ENCODE measurements at regions of chr2 and their contacts with region 1.

Region 1: GRCh38 chr2:20446917-20447436 is at the start of gene RHOB:
- DNase-seq: peak; percentile 79 to 88 (median 82)
- H3K4me3 ChIP-seq: peak within 1 kb of the TSS; percentile 47 to 76
- H3K4me3 Mint-ChIP-seq: peak within 1 kb of the TSS; percentile 78 to 86 (median 82)
- H3K27ac ChIP-seq: peak within 1 kb of the TSS; percentile 47
- H3K27ac Mint-ChIP-seq: peak within 1 kb of the TSS in 5 of 7 donors; percentile 61 to 90 (median 75)
- H3K4me1 ChIP-seq: peaks cover 11% of the 10 kb centered on the region
- H3K4me1 Mint-ChIP-seq: peaks cover 0 to 9% (median 3%) of the 10 kb centered on the region in 4 donors
- H3K27me3 ChIP-seq: peaks cover 10% of the 10 kb centered on the region
- H3K27me3 Mint-ChIP-seq: peaks cover 8 to 13% of the 10 kb centered on the region in 2 donors
- total RNA-seq, gene RHOB: 7.9 to 8.9 TPM

Region 2: GRCh38 chr2:20424300-20425290 is 22.4 kb before region 1 on chr2:
- CTCF ChIA-PET with region 1: interaction called, 4 read pairs
- POLR2A ChIA-PET with region 1: interaction called, 14 read pairs
- intact Hi-C with region 1: no loop called
- DNase-seq: peak in 1 of 5 donors; percentile 9
- H3K4me3 ChIP-seq: no peak overlapping the region
- H3K4me3 Mint-ChIP-seq: peak overlapping the region in 7 of 8 donors; percentile 44 to 70 (median 63)
- H3K27ac ChIP-seq: no peak overlapping the region
- H3K27ac Mint-ChIP-seq: peak overlapping the region in 6 of 7 donors; percentile 82 to 94 (median 86)
- H3K4me1 ChIP-seq: peaks cover 15% of the 10 kb centered on the region
- H3K4me1 Mint-ChIP-seq: peaks cover 11 to 22% (median 17%) of the 10 kb centered on the region in 4 donors
- H3K27me3 ChIP-seq: no peaks in the 10 kb centered on the region
- H3K27me3 Mint-ChIP-seq: peaks cover 4% of the 10 kb centered on the region in 2 donors

Region 3: GRCh38 chr2:20578895-20579825 is 132.2 kb after region 1 on chr2:
- CTCF ChIA-PET with region 1: interaction called, 3 read pairs
- POLR2A ChIA-PET with region 1: interaction called, 31 read pairs
- intact Hi-C with region 1: loop called (anchors 5 kb)
- DNase-seq: no peak
- H3K4me3 ChIP-seq: no peak overlapping the region
- H3K4me3 Mint-ChIP-seq: no peak overlapping the region
- H3K27ac ChIP-seq: no peak overlapping the region
- H3K27ac Mint-ChIP-seq: no peak overlapping the region
- H3K4me1 ChIP-seq: peaks cover 18% of the 10 kb centered on the region
- H3K4me1 Mint-ChIP-seq: peaks cover 13 to 17% (median 15%) of the 10 kb centered on the region in 4 donors
- H3K27me3 ChIP-seq: no peaks in the 10 kb centered on the region
- H3K27me3 Mint-ChIP-seq: no peaks in the 10 kb centered on the region

Region 4: DNA sequence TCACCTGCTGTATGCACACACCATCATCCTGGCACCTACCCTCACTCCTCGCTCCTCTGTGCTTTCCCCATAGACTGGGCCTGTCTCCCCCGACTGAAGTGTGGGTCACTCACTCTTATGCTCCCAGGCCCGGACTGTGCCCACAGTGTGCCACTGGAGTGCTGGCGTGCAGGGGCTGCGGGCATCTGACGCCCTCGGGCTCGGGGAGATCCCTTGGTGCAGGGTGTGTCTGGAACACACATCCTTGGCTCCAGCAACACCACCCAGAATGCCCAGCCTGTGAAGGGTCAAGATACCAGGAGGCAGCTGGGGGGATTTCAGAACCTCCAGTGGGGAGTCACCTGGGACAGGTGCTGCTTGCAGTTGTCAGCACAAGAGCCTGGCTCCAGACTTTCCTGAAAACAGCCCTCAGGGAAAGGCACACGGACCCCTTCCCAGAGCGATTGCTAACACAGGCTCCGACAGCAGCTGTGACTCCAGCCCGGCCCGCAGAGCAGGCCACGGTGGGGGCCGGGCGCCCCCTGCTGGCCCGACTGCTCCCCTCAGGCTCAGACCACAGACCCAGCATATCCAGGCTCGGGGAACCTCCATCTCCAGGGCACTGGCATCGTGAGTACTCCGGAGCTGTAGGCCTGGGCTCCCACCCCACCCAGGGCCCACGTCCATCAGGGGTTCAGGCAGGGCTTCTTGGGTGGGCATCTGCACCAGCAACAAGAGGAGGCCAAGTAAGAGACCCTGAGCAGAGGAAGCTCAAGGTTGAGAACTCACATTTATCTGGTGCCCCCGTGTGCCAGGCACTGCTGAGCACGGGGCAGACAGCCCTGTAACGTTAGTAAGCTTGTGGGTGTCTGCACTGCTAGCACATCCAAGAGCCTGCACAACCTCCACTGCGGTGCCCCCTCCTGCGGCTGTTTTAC is 195.3 kb after region 1 on chr2:
- CTCF ChIA-PET with region 1: interaction called, 92 read pairs
- POLR2A ChIA-PET with region 1: interaction called, 20 read pairs
- intact Hi-C with region 1: loop called (anchors 1 kb)
- DNase-seq: peak; percentile 64 to 73 (median 70)
- H3K4me3 ChIP-seq: no peak overlapping the region
- H3K4me3 Mint-ChIP-seq: no peak overlapping the region
- H3K27ac ChIP-seq: no peak overlapping the region
- H3K27ac Mint-ChIP-seq: no peak overlapping the region
- H3K4me1 ChIP-seq: no peaks in the 10 kb centered on the region
- H3K4me1 Mint-ChIP-seq: peaks cover 5 to 13% (median 7%) of the 10 kb centered on the region in 4 donors
- H3K27me3 ChIP-seq: no peaks in the 10 kb centered on the region
- H3K27me3 Mint-ChIP-seq: no peaks in the 10 kb centered on the region

Region 5: DNA sequence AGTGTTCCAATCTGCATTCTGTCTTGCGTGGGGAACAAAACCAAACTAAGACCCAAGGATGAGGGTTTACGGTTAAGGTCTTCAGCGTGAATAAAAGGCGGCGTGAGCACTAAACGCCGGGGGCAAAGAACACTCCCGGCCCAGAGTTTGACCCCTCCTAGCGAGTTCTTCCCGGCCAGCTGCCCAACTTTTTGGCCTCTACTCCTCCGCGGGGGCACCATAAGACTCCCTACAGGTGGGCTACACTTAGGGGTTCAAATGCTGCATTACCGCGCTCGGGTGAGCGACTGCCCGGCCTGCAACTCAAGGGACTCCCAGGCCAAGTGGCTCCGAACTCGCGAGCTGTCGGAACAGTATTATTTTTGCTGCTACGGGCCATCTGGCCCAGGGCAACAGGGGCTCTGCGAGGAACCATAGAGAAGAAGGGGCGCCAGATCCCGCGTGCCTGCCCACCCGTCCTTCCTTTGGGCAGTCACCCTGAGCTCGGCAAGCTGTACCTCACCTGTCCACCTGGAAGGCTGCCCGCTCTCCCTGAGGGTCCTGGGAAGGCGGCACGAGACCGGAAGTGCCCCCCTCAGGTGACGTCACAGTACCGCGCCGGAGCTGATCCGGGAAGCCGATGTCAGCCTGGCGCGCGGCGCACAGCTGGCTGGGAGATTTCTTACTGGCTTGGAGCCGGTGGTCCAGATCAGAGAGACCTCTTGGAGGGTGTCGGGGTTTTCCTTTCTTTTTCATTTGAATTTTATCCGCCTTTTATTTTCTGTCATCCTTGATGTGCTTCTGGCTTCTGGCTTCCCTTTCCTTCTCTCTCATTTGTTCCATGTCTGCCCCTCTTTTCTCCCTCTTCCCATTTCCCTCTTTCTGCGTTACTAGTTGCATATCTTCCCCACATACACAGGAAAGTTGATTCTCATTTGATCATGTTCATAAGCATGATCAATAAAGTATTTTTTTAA is 375.8 kb after region 1 on chr2 and contains the start of gene LDAH:
- CTCF ChIA-PET with region 1: interaction called, 3 read pairs
- POLR2A ChIA-PET with region 1: no interaction called
- intact Hi-C with region 1: loop called (anchors 2 kb)
- DNase-seq: peak; percentile 79 to 84 (median 82)
- H3K4me3 ChIP-seq: peak within 1 kb of the TSS; percentile 81 to 85
- H3K4me3 Mint-ChIP-seq: peak within 1 kb of the TSS; percentile 93 to 99 (median 98)
- H3K27ac ChIP-seq: peak within 1 kb of the TSS; percentile 83
- H3K27ac Mint-ChIP-seq: peak within 1 kb of the TSS; percentile 97 to 100 (median 98)
- H3K4me1 ChIP-seq: peaks cover 3% of the 10 kb centered on the region
- H3K4me1 Mint-ChIP-seq: peaks cover 15 to 36% (median 26%) of the 10 kb centered on the region in 4 donors
- H3K27me3 ChIP-seq: no peaks in the 10 kb centered on the region
- H3K27me3 Mint-ChIP-seq: no peaks in the 10 kb centered on the region
- total RNA-seq, gene LDAH: 22.7 to 23.9 TPM

Region 6: DNA sequence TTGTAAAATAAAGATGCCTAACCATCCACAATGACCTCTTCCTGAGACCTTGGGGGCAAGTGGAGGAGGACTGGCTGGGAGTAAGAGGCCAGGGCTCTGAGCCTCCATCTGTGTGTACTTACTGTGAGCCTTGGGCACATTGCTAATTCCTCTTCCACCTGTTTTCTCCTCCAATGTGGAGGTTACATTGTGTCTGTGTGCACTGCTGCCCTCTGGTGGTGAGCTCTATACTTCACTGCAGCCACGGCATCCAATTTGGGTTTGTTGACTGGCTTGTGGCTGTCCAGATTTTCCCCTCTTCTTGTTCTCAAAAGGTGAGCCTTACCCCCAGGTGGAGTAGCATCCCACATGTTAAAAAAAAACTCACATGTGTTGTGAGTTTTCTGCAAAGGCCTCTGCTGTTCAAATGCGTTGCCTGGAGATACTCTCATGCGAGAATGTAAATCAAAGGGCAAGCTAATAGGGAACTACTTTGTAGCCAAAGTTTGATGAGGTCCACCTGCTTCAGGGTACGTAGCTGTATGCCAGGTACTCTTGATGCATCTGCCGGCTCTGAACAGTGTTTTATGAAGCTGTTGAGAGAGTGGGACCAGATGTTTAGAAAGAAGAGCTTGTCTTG is 516.1 kb after region 1 on chr2:
- CTCF ChIA-PET with region 1: interaction called, 13 read pairs
- POLR2A ChIA-PET with region 1: no interaction called
- intact Hi-C with region 1: no loop called
- DNase-seq: peak; percentile 47 to 55 (median 53)
- H3K4me3 ChIP-seq: no peak overlapping the region
- H3K4me3 Mint-ChIP-seq: no peak overlapping the region
- H3K27ac ChIP-seq: no peak overlapping the region
- H3K27ac Mint-ChIP-seq: no peak overlapping the region
- H3K4me1 ChIP-seq: no peaks in the 10 kb centered on the region
- H3K4me1 Mint-ChIP-seq: no peaks in the 10 kb centered on the region
- H3K27me3 ChIP-seq: no peaks in the 10 kb centered on the region
- H3K27me3 Mint-ChIP-seq: peaks cover 9 to 29% of the 10 kb centered on the region in 2 donors